Left cardiac atrium (tissue), 4 donors: ENCODE measurements at regions of chr6 and their contacts with region 1.

Region 1: DNA sequence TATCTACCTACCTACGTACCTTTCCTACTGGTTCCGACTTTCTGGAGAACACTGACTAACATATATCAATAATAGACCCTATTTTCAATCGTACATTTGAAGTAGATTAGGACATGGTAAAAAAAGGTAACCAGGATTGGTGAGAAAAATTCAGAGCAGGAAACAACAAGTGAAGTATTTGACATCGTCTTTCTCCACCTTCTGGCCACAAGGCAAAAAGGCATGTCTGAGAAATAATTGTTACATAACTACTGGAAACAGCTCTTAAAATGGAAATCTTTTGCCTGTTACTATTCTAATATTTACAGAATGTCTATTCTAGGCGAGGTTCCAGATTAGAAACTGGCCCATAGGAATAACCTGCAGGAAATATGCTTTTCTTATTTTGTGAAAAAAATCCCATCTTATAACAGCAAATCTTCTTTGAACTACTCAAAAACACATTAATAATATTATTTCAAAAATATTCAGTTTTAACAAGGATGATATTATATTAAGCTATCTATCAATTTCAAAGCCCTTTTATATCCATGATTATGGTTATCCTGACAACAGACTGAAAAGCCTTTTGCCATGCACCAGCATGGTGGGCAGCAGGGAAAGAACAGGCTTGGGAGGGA is 80.8 kb downstream of the RCAN2 start:
- DNase-seq: no peak
- ATAC-seq: peak; percentile 42 to 53

Region 2: GRCh38 chr6:46221222-46221793 is 189.1 kb before region 1 on chr6:
- intact Hi-C with region 1: loop called (anchors 1 to 5 kb)
- DNase-seq: no peak
- ATAC-seq: peak; percentile 63 to 83